SK-N-SH (cell line): ENCODE measurements at regions of chr6 and their contacts with region 1.

Region 1: DNA sequence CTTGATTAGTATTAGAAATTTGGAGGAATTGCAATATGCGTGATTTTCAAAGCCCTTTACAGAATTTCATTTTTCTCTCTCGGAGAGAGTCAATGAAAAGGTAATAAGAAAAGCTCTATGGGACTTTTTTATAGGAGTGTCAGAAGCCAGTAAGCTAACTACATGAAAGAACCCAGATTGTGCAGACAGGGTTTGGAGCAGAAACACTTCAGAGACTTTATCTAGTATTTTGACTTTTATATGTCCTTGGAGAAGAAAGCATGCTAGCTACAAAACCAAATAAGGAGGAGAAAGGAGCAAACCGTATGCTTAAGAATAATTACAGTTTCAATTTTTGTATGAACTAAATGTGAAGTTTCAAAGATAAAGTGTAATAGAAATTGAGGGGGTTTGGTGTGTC is 141.7 kb downstream of the C6orf58 start:
- DNase-seq: no peak
- H3K4me3 ChIP-seq: no peak overlapping the region
- H3K27ac ChIP-seq: no peak overlapping the region
- H3K4me1 ChIP-seq: no peaks in the 10 kb centered on the region
- H3K27me3 ChIP-seq: no peaks in the 10 kb centered on the region
- CTCF ChIP-seq: no peak
- EP300 ChIP-seq: no peak
- RAD21 ChIP-seq: no peak

Region 2: GRCh38 chr6:127706216-127706615 is 12.5 kb before region 1 on chr6:
- CTCF ChIA-PET with region 1: no interaction called
- POLR2A ChIA-PET with region 1: no interaction called
- DNase-seq: no peak
- H3K4me3 ChIP-seq: no peak overlapping the region
- H3K27ac ChIP-seq: no peak overlapping the region
- H3K4me1 ChIP-seq: no peaks in the 10 kb centered on the region
- H3K27me3 ChIP-seq: no peaks in the 10 kb centered on the region
- CTCF ChIP-seq: no peak
- EP300 ChIP-seq: no peak
- RAD21 ChIP-seq: no peak

Region 3: GRCh38 chr6:127737009-127737486 is 18.4 kb after region 1 on chr6:
- CTCF ChIA-PET with region 1: interaction called, 15 read pairs
- POLR2A ChIA-PET with region 1: no interaction called
- DNase-seq: peak; percentile 37
- H3K4me3 ChIP-seq: no peak overlapping the region
- H3K27ac ChIP-seq: no peak overlapping the region
- H3K4me1 ChIP-seq: no peaks in the 10 kb centered on the region
- H3K27me3 ChIP-seq: no peaks in the 10 kb centered on the region
- CTCF ChIP-seq: peak; percentile 80
- EP300 ChIP-seq: no peak
- RAD21 ChIP-seq: peak; percentile 82